Right cardiac atrium (tissue), 5 donors: ENCODE measurements at regions of chr11 and their contacts with region 1.

Region 1: DNA sequence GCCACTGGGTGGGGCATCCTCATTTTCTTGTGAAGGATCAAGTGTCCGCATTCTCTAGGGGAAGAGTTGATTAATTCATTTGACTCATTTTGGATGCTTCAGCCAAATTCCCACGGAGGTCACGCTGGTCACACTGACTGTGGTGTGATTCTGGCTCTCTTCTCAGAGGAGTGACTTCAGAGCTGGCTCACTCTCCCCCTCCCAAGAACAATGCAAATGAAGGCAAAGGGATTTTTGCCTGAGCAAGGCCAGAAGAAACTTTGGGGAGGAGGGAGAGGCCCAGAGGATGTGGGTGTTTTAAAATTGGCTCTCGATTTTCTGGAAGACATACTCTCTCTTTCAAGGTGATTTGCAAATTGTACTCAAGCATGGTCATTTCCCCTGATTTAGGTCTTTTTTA is 51.1 kb upstream of the LMO2 start:
- DNase-seq: peak; percentile 80 to 83 (median 82)
- ATAC-seq: peak; percentile 79 to 85
- H3K4me3 ChIP-seq: no peak overlapping the region
- H3K27ac ChIP-seq: no peak overlapping the region
- H3K4me1 ChIP-seq: peaks cover 5% of the 10 kb centered on the region
- H3K27me3 ChIP-seq: no peaks in the 10 kb centered on the region

Region 2: GRCh38 chr11:33869481-33870422 is 73.2 kb before region 1 on chr11:
- intact Hi-C with region 1: loop called in 1 of 4 experiments (anchors 5 kb)
- DNase-seq: peak; percentile 63 to 83 (median 80)
- ATAC-seq: peak; percentile 85 to 90
- H3K4me3 ChIP-seq: peak overlapping the region; percentile 89
- H3K27ac ChIP-seq: peak overlapping the region; percentile 57
- H3K4me1 ChIP-seq: no peaks in the 10 kb centered on the region
- H3K27me3 ChIP-seq: no peaks in the 10 kb centered on the region